Mucosa of descending colon (tissue), 3 donors: ENCODE measurements at regions of chr19 and their contacts with region 1.

Region 1: DNA sequence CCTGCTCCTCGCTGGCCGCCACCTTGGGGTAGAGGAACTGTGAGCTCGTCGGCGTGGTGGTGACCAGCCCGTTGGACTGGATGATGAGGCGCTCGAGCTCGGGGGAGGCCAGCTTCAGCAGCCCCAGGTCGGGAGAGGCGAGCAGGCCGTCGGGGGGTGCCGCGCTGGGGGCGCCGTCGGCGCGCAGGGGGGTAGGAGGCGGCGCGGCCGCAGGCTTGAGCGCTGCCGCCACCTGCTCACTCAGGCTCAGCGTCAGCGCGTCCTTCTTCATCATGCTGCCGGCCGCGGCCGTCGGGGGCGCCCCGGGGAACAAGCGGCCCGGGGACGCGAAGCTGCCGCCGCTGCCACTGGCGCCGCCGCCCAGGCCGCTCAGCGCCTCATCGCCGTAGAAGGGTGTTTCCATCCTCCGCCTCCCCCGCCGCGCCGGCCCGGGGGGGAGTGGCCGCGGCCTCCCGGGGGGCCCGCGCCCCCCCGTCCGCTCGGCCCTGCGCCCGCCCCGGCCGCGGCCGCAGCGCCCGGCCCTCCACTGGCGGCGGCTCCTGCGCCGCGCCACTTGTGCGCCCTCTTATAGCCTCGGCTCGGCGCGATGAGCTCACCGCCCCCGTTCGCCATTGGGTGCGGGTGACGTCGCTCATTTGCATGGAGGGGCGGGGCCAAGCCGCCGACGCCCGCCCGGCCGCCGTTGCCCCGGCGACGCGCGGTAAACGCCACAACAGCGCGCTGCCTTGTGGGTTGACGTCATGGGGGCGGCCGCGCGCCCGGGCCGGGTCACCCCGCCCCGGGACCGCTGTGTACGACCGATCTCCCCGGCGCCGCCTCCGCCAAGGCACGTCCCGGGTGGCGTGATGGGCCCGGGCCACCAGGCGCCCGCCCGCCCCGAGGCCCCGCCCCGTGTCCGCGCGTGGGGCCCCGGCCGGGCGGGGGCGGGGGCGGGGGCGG is at the start of gene JUND:
- DNase-seq: peak; percentile 97 to 99 (median 98)
- ATAC-seq: peak; percentile 69
- H3K4me3 ChIP-seq: peak within 1 kb of the TSS; percentile 98
- H3K4me1 ChIP-seq: peaks cover 52% of the 10 kb centered on the region
- CTCF ChIP-seq: no peak
- total RNA-seq, gene JUND: 267 to 328 (median 295) TPM

Region 2: GRCh38 chr19:16737911-16738310 is 1543.4 kb before region 1 on chr19:
- intact Hi-C with region 1: no loop called
- DNase-seq: peak in 1 of 3 donors; percentile 62
- ATAC-seq: peak; percentile 16
- H3K4me3 ChIP-seq: no peak overlapping the region
- H3K4me1 ChIP-seq: peaks cover 4% of the 10 kb centered on the region
- CTCF ChIP-seq: no peak

Region 3: GRCh38 chr19:18322759-18323460 is 41.6 kb after region 1 on chr19 and contains the start of gene LSM4:
- intact Hi-C with region 1: loop called (anchors 5 kb)
- DNase-seq: peak; percentile 99 to 100 (median 99)
- ATAC-seq: peak; percentile 81
- H3K4me3 ChIP-seq: peak within 1 kb of the TSS; percentile 59
- H3K4me1 ChIP-seq: peaks cover 47% of the 10 kb centered on the region
- CTCF ChIP-seq: peak; percentile 1
- total RNA-seq, gene LSM4: 86.3 to 158 (median 124) TPM

Region 4: DNA sequence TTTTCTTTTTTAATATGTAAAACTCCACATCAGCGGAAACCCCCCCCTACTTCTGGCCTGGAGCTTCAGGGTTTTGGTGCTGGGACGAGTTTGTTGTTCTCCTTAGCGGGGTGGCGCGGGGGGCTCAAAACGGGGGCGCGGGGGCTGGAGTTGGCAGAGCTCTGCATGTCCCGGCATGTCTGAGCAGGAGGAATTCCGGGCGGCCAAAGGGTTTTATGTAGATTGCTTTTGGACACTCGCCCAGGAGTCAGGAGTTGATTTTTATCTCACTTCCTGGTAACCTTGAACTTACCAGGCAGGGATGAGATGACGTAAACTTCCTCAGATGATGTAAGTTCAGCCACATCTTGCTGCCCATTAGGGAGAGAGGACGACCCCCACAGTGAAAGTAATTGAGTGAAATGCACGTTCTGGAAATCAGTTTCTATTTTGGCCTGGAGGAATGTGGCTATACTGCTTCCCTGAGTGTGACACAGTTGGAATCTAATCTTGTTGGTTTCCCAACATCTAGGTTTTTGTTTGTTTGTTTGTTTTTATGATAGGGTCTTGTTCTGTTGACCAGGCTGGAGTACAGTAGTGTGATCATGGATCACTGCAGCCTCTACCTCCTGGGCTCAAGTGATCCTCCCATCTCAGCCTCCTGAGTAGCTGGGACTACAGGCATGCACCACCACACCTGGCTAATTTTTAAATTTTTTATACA is 83.6 kb after region 1 on chr19:
- intact Hi-C with region 1: no loop called
- DNase-seq: peak; percentile 74 to 95 (median 77)
- ATAC-seq: peak; percentile 89
- H3K4me3 ChIP-seq: no peak overlapping the region
- H3K4me1 ChIP-seq: peaks cover 17% of the 10 kb centered on the region
- CTCF ChIP-seq: no peak